HCT116 (cell line): ENCODE measurements at regions of chr15 and their contacts with region 1.

Region 1: GRCh38 chr15:78299101-78299930 is at the start of gene SKIC8:
- DNase-seq: peak; percentile 80
- ATAC-seq: peak; percentile 98
- H3K4me3 ChIP-seq: peak within 1 kb of the TSS; percentile 94 to 98
- H3K27ac ChIP-seq: peak within 1 kb of the TSS; percentile 66
- H3K4me1 ChIP-seq: peaks cover 6 to 30% of the 10 kb centered on the region in 2 experiments
- H3K27me3 ChIP-seq: no peaks in the 10 kb centered on the region
- CTCF ChIP-seq: 0 out of 6 replicates have a peak, but pooled peaks of 1 of the 3 experiments have one; percentile 14
- POLR2A ChIP-seq: peak; percentile 57
- RAD21 ChIP-seq: no peak
- total RNA-seq, gene SKIC8: 57.1 TPM

Region 2: GRCh38 chr15:78264304-78265136 is 34.8 kb before region 1 on chr15 and contains the start of gene DNAJA4:
- CTCF ChIA-PET with region 1: interaction called, 3 read pairs
- POLR2A ChIA-PET with region 1: interaction called, 23 read pairs
- RAD21 ChIA-PET with region 1: no interaction called
- intact Hi-C with region 1: no loop called
- DNase-seq: no peak
- ATAC-seq: peak; percentile 66
- H3K4me3 ChIP-seq: peak within 1 kb of the TSS; percentile 65 to 75
- H3K27ac ChIP-seq: peak within 1 kb of the TSS; percentile 98
- H3K4me1 ChIP-seq: peaks cover 8 to 23% of the 10 kb centered on the region in 2 experiments
- H3K27me3 ChIP-seq: no peaks in the 10 kb centered on the region
- CTCF ChIP-seq: peak in 1 of 3 experiments; percentile 24; a peak in 1 of 6 replicates
- POLR2A ChIP-seq: no peak
- RAD21 ChIP-seq: 0 out of 2 replicates have a peak, but pooled peaks have one; percentile 11
- total RNA-seq, gene DNAJA4: 66.6 TPM